Dorsolateral prefrontal cortex (tissue), 120 donors: ENCODE measurements at regions of chr17 and their contacts with region 1.

Region 1: DNA sequence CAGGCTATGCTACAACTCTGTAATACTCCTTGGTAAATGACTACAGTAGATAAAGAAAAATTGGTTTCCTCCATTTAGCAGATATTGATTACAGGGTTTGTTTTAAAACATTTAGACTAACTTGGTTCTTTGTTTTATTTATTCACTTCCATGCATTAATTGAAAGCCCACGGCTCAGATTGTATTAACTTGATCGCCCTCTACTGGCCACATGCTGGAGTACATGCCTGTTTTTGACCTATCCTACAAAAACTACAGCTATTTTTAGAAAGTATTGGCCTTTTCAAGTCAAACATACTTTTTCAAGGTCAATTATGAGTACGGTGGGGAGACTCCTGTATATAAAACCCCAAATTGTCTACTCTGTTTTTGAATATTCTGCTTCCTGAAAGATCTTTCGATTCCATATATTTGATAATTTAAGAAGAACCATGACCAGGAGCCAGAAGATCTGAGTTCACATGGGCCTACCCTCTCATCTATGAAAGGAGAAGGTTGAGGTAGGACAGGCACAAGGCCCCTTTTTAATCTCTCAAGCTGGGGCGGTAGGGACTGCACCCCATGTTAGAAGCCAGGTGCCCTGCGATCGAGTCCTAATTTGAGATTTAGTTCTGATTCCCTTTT is 51.8 kb downstream of the CA10 start:
- DNase-seq: peak in 6 of 10 donors; percentile 35 to 79 (median 60)
- H3K4me3 ChIP-seq: no peak overlapping the region
- H3K27ac ChIP-seq: no peak overlapping the region
- H3K27me3 ChIP-seq: peaks cover 0 to 5% (median 0%) of the 10 kb centered on the region in 45 donors
- CTCF ChIP-seq: peak; percentile 64 to 95 (median 86)

Region 2: GRCh38 chr17:51305182-51305581 is 801.6 kb before region 1 on chr17:
- intact Hi-C with region 1: loop called in 1 of 2 experiments (anchors 10 kb)
- DNase-seq: no peak
- H3K4me3 ChIP-seq: no peak overlapping the region
- H3K27ac ChIP-seq: no peak overlapping the region
- H3K27me3 ChIP-seq: no peaks in the 10 kb centered on the region
- CTCF ChIP-seq: no peak

Region 3: DNA sequence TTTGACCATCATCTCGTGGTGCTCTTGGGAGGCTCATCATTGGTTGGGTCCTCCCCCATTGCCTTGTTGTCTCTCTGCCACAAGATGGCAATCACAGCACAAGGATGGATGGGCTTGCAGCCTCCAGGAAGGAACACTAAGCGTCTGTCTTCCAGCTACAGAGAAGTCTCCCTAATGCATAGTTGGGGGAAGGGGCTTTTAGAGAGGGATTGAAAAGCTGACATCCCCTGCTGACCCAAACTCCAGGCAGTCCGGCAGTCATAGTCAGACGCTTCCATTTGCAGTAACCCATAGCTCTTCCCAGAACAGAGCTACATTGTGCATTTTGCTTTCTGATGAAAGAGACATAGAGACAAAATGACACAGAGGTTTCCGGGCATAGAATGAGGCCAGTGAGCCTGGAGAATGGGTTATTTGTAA is 735.0 kb before region 1 on chr17:
- intact Hi-C with region 1: loop called in 1 of 2 experiments (anchors 5 kb)
- DNase-seq: peak in 9 of 10 donors; percentile 66 to 85 (median 80)
- H3K4me3 ChIP-seq: peak overlapping the region in 51 of 59 donors; percentile 3 to 68 (median 44)
- H3K27ac ChIP-seq: peak overlapping the region; percentile 43 to 99 (median 96)
- H3K27me3 ChIP-seq: no peaks in the 10 kb centered on the region
- CTCF ChIP-seq: peak; percentile 60 to 93 (median 82)

Region 4: GRCh38 chr17:51764387-51764972 is 342.3 kb before region 1 on chr17:
- intact Hi-C with region 1: loop called (anchors 2 to 5 kb)
- DNase-seq: peak in 7 of 10 donors; percentile 21 to 76 (median 53)
- H3K4me3 ChIP-seq: no peak overlapping the region
- H3K27ac ChIP-seq: no peak overlapping the region
- H3K27me3 ChIP-seq: peaks cover 0 to 4% (median 0%) of the 10 kb centered on the region in 45 donors
- CTCF ChIP-seq: peak in 55 of 56 donors; percentile 49 to 89 (median 82)

Region 5: GRCh38 chr17:51860954-51861561 is 245.7 kb before region 1 on chr17:
- intact Hi-C with region 1: loop called (anchors 1 to 5 kb)
- DNase-seq: peak in 7 of 10 donors; percentile 16 to 61 (median 53)
- H3K4me3 ChIP-seq: no peak overlapping the region
- H3K27ac ChIP-seq: no peak overlapping the region
- H3K27me3 ChIP-seq: peaks cover 0 to 6% (median 0%) of the 10 kb centered on the region in 45 donors
- CTCF ChIP-seq: peak; percentile 36 to 81 (median 70)

Region 6: DNA sequence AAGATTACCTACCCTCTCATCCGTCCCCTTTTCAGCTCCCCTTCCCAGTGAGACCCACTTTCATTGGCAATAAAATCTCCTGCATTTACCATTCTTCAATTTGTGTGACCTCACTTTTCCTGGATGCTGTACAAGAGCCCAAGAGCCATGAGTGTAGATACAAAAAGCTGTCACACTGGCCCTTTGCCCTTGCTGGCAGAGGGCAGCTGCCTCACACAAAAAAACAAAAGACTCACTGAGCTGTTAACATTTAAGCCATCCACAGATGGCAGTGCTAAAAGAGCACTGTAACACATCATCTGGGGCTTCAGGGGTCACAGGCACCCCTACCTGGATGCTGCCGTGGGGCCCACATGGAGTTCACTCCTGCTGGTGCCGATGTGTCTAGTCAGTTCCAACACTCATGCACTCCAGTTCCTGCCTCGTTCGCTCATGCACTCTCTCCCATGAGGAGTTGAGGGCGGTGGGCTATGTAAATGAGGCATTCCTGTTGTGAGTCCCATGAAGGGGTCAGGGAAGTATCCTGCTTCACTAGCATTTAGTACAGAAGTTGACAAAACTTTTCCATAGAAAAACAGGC is 71.3 kb before region 1 on chr17:
- intact Hi-C with region 1: loop called (anchors 10 kb)
- DNase-seq: peak; percentile 5 to 80 (median 40)
- H3K4me3 ChIP-seq: no peak overlapping the region
- H3K27ac ChIP-seq: peak overlapping the region in 25 of 59 donors; percentile 11 to 84 (median 36)
- H3K27me3 ChIP-seq: no peaks in the 10 kb centered on the region
- CTCF ChIP-seq: peak in 8 of 56 donors; percentile 9 to 27 (median 14)